ENCODE measurements at regions of chr7 and their contacts with region 1.

Region 1: GRCh38 chr7:129210256-129210988 is 14.4 kb upstream of the AHCYL2 start:
- DNase-seq: peak; percentile 79
- H3K4me3 Mint-ChIP-seq: no peak overlapping the region
- H3K27ac Mint-ChIP-seq: no peak overlapping the region
- H3K4me1 Mint-ChIP-seq: no peaks in the 10 kb centered on the region
- H3K27me3 Mint-ChIP-seq: peaks cover 44% of the 10 kb centered on the region

Region 2: GRCh38 chr7:129091484-129092002 is 118.9 kb before region 1 on chr7:
- CTCF ChIA-PET with region 1: interaction called, 16 read pairs
- DNase-seq: peak; percentile 92
- H3K4me3 Mint-ChIP-seq: no peak overlapping the region
- H3K27ac Mint-ChIP-seq: no peak overlapping the region
- H3K4me1 Mint-ChIP-seq: peaks cover 37% of the 10 kb centered on the region
- H3K27me3 Mint-ChIP-seq: peaks cover 12% of the 10 kb centered on the region

Region 3: DNA sequence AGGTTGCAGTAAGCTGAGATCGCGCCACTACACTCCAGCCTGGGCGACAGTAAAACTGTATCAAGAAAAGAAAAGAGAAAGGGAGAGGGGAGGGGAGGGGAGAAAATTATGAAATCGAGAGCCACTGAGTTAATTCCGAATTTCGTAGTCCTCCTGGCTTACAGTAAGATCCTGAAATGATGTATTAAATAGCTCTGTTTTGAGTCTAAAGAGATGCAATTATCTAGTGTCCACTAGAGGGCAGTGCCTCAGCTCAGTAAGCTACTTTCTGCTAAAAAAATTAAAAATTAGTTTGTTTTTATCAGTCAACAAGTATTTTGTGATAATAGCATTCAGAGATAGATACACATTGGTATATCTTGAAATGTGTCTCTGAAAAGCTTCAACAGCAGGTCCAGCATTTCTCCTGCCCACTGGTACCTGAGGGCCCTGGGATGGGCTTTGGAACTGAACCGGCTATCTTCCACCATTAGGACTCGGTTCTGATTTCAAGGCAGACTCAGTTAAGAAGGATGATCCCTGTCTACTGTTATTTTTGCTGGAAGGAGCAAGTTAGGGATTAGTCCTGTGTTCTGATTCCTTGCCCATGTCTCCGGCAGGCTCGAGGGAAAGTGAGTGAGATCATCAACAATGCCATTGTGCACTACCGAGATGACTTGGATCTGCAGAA is 46.4 kb before region 1 on chr7:
- CTCF ChIA-PET with region 1: interaction called, 108 read pairs
- DNase-seq: no peak
- H3K4me3 Mint-ChIP-seq: no peak overlapping the region
- H3K27ac Mint-ChIP-seq: no peak overlapping the region
- H3K4me1 Mint-ChIP-seq: peaks cover 11% of the 10 kb centered on the region
- H3K27me3 Mint-ChIP-seq: peaks cover 17% of the 10 kb centered on the region

Region 4: DNA sequence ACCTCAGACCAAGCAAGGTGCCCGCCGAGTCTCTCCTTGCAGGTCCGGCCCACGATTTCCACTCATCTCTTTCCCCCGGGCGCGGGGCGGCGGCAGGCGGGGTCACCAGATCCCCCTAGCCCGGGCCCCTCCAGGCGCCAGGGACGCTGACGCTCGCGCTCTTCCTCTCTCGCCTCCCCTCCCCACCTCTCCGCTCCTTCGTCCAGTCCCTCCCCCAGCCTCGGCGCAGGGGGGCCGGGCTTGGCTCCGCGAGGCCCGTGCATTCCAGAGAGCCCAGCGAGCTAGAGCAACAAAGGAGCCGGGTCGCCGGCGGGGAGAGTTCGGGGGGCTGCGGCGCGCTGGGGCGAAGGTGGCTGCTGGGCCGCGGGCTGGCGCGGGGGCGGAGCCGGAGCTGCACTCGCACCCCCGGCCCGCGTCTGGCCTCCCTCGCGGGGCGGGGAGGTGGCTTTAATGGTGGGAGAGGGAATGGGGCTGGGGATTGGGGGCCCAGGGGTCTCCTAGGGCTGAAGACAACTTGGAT is 22.0 kb before region 1 on chr7 and contains the start of gene SMO:
- CTCF ChIA-PET with region 1: no interaction called
- DNase-seq: no peak
- H3K4me3 Mint-ChIP-seq: peak within 1 kb of the TSS; percentile 62
- H3K27ac Mint-ChIP-seq: no peak within 1 kb of the TSS
- H3K4me1 Mint-ChIP-seq: peaks cover 11% of the 10 kb centered on the region
- H3K27me3 Mint-ChIP-seq: peaks cover 81% of the 10 kb centered on the region

Region 5: DNA sequence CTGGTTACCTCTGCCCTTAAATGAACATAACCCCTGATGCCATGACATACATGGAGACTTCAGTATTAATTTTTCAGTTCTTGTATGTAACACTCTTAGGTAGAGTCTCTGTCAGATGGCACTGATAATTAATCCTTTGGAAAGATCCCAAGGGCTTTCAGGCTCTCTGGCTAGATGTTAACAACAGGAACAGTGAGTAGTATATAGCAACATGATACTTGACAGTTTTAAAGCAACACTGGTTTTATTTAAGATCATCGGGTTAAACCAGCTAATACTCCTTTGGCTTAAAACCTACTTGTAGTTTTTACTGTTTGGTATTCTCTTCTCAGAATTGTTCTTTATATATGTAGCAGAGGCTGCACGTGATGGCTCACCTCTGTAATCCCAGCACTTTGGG is 41.7 kb after region 1 on chr7:
- CTCF ChIA-PET with region 1: no interaction called
- DNase-seq: no peak
- H3K4me3 Mint-ChIP-seq: no peak overlapping the region
- H3K27ac Mint-ChIP-seq: no peak overlapping the region
- H3K4me1 Mint-ChIP-seq: no peaks in the 10 kb centered on the region
- H3K27me3 Mint-ChIP-seq: no peaks in the 10 kb centered on the region

Region 6: DNA sequence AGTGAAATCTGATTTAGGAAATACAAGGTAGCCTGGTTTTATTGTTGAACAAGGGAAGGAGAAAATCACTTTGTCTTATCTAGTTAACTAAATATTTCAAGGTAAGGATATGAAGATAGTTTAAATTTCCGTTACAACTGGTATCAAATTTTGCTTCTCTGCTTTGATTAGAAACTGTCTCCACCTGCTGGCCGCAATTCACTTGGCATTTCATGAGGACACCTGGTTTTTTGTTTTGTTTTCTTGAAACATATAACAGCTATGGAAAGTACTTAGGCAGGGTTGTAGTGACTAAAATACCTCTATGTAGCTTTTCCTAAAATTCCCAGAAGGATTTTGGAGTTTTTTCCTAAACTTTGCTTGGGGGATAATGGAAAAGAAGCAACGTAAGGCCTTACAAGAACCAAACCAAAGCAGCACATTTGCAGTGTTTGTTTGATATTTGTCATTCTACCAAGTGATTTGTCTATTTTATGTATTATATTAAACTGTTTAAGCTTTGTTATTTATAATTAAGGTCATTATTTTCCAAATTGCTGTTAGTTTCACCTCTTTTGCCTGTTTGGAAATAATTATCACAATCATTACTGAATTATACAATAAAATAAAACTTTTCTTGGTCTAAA is 88.0 kb after region 1 on chr7:
- CTCF ChIA-PET with region 1: interaction called, 12 read pairs
- DNase-seq: peak; percentile 73
- H3K4me3 Mint-ChIP-seq: no peak overlapping the region
- H3K27ac Mint-ChIP-seq: no peak overlapping the region
- H3K4me1 Mint-ChIP-seq: no peaks in the 10 kb centered on the region
- H3K27me3 Mint-ChIP-seq: no peaks in the 10 kb centered on the region